Activated CD4-positive, alpha-beta T cell treated with anti-CD3 and anti-CD28 coated beads for 36 hours (primary cell): ENCODE measurements at regions of chrX and their contacts with region 1.

Region 1: GRCh38 chrX:9352694-9353411 is 112.0 kb upstream of the TBL1X start:
- DNase-seq: peak; percentile 64
- ATAC-seq: peak; percentile 47
- H3K4me3 Mint-ChIP-seq: peak overlapping the region; percentile 23
- H3K27ac Mint-ChIP-seq: peak overlapping the region; percentile 77
- H3K4me1 Mint-ChIP-seq: peaks cover 31% of the 10 kb centered on the region
- H3K27me3 Mint-ChIP-seq: no peaks in the 10 kb centered on the region

Region 2: GRCh38 chrX:9163214-9163681 is 189.6 kb before region 1 on chrX:
- CTCF ChIA-PET with region 1: no interaction called
- POLR2A ChIA-PET with region 1: no interaction called
- intact Hi-C with region 1: loop called in 1 of 2 experiments (anchors 5 kb)
- DNase-seq: no peak
- ATAC-seq: no peak
- H3K4me3 Mint-ChIP-seq: no peak overlapping the region
- H3K27ac Mint-ChIP-seq: no peak overlapping the region
- H3K4me1 Mint-ChIP-seq: peaks cover 42% of the 10 kb centered on the region
- H3K27me3 Mint-ChIP-seq: peaks cover 2% of the 10 kb centered on the region

Region 3: DNA sequence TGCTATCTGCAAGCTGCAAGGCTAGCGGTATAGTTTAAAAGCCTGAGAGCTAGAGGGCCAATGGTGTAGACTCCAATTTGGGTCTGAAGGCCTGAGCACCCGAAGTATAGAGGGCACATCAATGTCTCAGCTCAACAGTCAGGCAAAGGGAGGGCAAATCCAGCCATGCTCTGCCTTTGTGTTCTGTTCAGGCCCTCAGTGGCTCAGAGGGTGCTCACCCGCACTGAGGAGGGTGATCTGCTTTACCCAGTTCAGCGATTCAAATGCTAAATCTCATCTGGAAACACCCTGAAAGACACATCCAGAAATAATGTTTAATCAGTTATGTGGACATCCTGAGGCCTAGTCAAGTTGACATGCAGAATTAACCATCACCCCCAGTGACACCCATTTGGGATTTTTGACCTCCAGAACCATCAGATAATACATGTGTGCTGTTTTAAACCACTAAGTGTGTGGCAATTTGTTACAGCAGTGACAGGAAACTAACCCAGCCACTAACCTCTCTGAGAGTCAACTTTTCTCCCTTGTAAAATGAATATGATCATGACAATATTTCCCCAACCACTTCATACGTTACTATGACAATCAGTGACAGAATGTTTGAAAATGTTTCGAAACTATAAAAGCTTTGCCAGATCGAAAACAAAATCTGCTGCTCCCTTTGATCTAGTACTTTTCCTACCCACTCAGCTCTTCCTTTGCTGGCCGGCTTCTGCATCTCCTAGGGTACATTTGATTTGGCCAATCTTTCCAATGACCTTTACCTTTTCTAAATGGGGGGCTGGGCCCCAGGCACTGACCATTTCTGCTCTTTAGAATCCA is 103.6 kb after region 1 on chrX:
- CTCF ChIA-PET with region 1: interaction called, 3 read pairs
- POLR2A ChIA-PET with region 1: no interaction called
- intact Hi-C with region 1: loop called in 1 of 2 experiments (anchors 1 kb)
- DNase-seq: peak; percentile 49
- ATAC-seq: peak; percentile 89
- H3K4me3 Mint-ChIP-seq: peak overlapping the region; percentile 39
- H3K27ac Mint-ChIP-seq: peak overlapping the region; percentile 80
- H3K4me1 Mint-ChIP-seq: peaks cover 37% of the 10 kb centered on the region
- H3K27me3 Mint-ChIP-seq: no peaks in the 10 kb centered on the region

Region 4: GRCh38 chrX:9662148-9662547 is 309.3 kb after region 1 on chrX:
- CTCF ChIA-PET with region 1: no interaction called
- POLR2A ChIA-PET with region 1: no interaction called
- intact Hi-C with region 1: no loop called
- DNase-seq: no peak
- ATAC-seq: no peak
- H3K4me3 Mint-ChIP-seq: no peak overlapping the region
- H3K27ac Mint-ChIP-seq: no peak overlapping the region
- H3K4me1 Mint-ChIP-seq: no peaks in the 10 kb centered on the region
- H3K27me3 Mint-ChIP-seq: no peaks in the 10 kb centered on the region